B cell (primary cell): ENCODE measurements at regions of chr13 and their contacts with region 1.

Region 1: DNA sequence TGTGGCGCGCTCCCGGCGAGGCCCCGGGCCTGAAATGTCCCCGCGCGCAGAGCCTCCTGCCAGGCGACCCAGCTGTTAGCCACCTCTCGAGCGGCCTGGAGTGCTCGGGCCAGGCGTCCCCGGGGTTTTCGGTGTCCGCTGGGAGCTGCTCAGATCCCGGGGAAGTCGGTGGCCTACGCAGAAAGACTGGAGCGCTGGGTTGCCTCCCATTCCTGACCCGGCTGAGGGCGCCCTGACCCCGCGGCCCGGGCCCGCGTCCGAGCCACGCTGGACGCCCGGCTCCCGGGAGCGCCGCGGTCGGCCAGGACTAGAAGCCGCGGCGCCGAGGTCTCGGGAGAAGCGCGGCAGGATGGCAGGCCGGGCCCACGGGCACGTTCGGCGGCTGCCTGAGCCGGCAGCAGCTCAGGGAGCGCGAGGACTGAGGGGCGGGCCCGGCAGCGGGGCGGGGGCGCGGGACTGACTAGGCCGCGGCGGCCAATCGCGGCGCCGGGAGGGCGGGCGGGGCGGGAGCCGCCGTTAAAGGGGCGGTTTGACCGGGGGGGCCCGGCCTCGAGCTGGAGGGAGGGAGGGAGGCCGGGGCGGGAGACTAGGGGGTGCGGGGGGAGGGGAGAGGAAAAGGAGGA is 1.3 kb upstream of the ZIC2 start:
- DNase-seq: peak; percentile 60
- ATAC-seq: peak; percentile 69
- H3K4me3 ChIP-seq: peak overlapping the region in 4 of 5 experiments; percentile 2 to 45 (median 27)
- H3K4me3 Mint-ChIP-seq: no peak overlapping the region
- H3K27ac ChIP-seq: no peak overlapping the region
- H3K27ac Mint-ChIP-seq: no peak overlapping the region
- H3K4me1 ChIP-seq: peaks cover 21 to 56% of the 10 kb centered on the region in 2 donors
- H3K4me1 Mint-ChIP-seq: peaks cover 8% of the 10 kb centered on the region
- H3K27me3 ChIP-seq: peaks cover 4 to 84% (median 72%) of the 10 kb centered on the region in 4 experiments
- H3K27me3 Mint-ChIP-seq: peaks cover 52% of the 10 kb centered on the region
- CTCF ChIP-seq: no peak

Region 2: DNA sequence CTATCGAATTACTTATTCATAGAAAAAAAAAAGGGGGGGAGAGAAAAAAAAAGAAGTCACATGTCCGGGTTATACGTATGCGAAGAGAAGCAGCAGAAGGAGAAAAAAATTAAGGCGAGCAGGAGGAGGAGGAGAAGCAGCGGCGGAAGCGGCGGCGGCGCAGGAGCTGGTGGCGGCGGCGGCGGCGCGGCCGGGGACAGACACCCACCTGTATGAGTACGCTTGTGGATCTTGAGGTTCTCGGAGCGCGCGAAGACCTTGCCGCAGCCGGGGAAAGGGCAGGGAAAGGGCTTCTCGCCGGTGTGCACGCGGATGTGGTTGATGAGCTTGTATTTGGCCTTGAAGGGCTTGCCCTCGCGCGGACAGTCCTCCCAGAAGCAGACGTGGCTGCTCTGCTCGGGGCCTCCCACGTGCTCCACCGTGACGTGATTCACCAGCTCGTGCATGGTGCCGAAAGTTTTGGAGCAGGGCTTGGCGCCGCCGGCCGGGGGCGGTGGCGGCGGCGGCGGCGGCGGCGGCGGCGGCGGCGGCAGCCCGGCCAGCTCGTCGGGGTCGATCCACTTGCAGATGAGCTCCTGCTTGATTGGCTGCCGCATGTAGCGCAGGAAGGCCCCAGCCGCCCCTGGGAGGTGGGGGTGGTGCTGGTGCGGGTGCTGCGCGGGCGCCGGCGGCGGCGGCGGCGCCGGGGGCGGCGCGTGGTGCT is 10.2 kb before region 1 on chr13:
- CTCF ChIA-PET with region 1: no interaction called
- POLR2A ChIA-PET with region 1: no interaction called
- intact Hi-C with region 1: loop called (anchors 2 kb)
- DNase-seq: peak; percentile 65
- ATAC-seq: peak; percentile 41
- H3K4me3 ChIP-seq: peak overlapping the region in 3 of 5 experiments; percentile 34 to 53 (median 46)
- H3K4me3 Mint-ChIP-seq: peak overlapping the region; percentile 83
- H3K27ac ChIP-seq: no peak overlapping the region
- H3K27ac Mint-ChIP-seq: peak overlapping the region; percentile 71
- H3K4me1 ChIP-seq: peaks cover 29 to 53% of the 10 kb centered on the region in 2 donors
- H3K4me1 Mint-ChIP-seq: peaks cover 20% of the 10 kb centered on the region
- H3K27me3 ChIP-seq: peaks cover 0 to 84% (median 75%) of the 10 kb centered on the region in 4 experiments
- H3K27me3 Mint-ChIP-seq: peaks cover 66% of the 10 kb centered on the region
- CTCF ChIP-seq: no peak

Region 3: GRCh38 chr13:99995589-99996380 is 15.5 kb after region 1 on chr13:
- CTCF ChIA-PET with region 1: no interaction called
- POLR2A ChIA-PET with region 1: interaction called, 3 read pairs
- intact Hi-C with region 1: loop called (anchors 2 kb)
- DNase-seq: peak; percentile 52
- ATAC-seq: no peak
- H3K4me3 ChIP-seq: peak overlapping the region in 1 of 5 experiments; percentile 0
- H3K4me3 Mint-ChIP-seq: no peak overlapping the region
- H3K27ac ChIP-seq: no peak overlapping the region
- H3K27ac Mint-ChIP-seq: no peak overlapping the region
- H3K4me1 ChIP-seq: peaks cover 7 to 31% of the 10 kb centered on the region in 2 donors
- H3K4me1 Mint-ChIP-seq: peaks cover 2% of the 10 kb centered on the region
- H3K27me3 ChIP-seq: peaks cover 8 to 76% (median 65%) of the 10 kb centered on the region in 4 experiments
- H3K27me3 Mint-ChIP-seq: peaks cover 72% of the 10 kb centered on the region
- CTCF ChIP-seq: no peak